ENCODE measurements at regions of chr1 and their contacts with region 1.

Region 1: GRCh38 chr1:170765712-170766330 is 101.9 kb downstream of the PRRX1 start:
- DNase-seq: no peak
- H3K4me3 ChIP-seq: no peak overlapping the region
- H3K27ac ChIP-seq: no peak overlapping the region
- H3K4me1 ChIP-seq: no peaks in the 10 kb centered on the region
- H3K27me3 ChIP-seq: no peaks in the 10 kb centered on the region
- CTCF ChIP-seq: peak; percentile 59 to 72 (median 65)

Region 2: DNA sequence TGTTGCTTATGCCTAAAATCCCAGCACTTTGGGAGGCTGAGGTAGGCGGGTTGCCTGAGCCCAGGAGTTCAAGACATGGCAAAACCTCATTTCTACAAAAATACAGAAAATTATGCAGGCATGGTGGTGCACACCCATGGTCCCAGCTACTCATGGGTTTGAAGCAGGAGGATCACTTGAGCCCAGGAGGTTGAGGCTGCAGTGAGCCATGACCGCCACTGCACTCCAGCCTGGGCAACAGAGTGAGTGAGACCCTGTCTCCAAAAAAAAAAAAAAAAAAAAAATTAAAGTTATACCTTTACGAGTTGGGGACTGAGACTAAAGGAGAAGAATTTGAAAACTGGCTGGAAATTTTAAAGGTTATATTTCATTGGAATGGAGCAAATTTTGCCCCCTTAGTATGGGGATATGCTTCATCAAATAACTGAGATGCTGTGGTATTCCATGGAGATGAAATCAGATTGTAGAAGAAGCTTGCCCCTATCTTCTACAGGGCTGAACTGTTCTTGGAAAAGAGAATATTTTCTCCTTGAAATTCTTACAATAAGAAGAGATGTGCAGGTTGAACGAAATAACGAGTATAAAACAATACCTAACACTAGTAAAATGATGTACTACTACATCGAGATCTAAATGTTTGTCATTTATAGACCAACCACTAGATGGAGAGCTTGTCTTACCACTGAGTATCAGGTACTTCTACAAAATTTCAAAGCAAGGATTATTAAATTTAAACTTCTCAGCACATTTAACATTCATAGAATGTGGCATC is 837.2 kb before region 1 on chr1:
- intact Hi-C with region 1: loop called (anchors 2 kb)
- DNase-seq: no peak
- H3K4me3 ChIP-seq: no peak overlapping the region
- H3K27ac ChIP-seq: no peak overlapping the region
- H3K4me1 ChIP-seq: peaks cover 0 to 5% of the 10 kb centered on the region in 2 donors
- H3K27me3 ChIP-seq: no peaks in the 10 kb centered on the region
- CTCF ChIP-seq: peak; percentile 48 to 69 (median 65)

Region 3: GRCh38 chr1:170010443-170010842 is 755.4 kb before region 1 on chr1:
- intact Hi-C with region 1: loop called (anchors 10 kb)
- DNase-seq: no peak
- H3K4me3 ChIP-seq: no peak overlapping the region
- H3K27ac ChIP-seq: no peak overlapping the region
- H3K4me1 ChIP-seq: no peaks in the 10 kb centered on the region
- H3K27me3 ChIP-seq: no peaks in the 10 kb centered on the region
- CTCF ChIP-seq: peak in 2 of 3 experiments; percentile 31 to 52

Region 4: DNA sequence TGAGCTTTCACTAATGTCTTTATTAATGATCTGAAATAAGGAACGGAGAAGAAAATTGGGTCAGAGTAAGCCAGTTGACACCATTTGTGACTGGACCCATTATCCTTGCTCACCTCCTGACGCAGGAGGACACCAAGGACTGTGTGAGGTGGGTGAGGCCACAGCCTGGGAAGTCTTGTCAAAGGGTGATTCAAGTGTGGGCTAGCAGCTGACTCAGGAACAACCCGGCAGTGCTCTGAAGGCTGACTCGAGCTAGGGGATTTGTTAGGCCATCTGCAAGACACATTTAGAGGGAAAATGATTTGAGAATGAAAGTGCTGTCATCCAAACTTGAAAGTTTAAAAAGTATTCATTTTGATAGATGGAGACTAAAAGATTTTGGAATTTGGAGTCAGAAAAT is 80.7 kb before region 1 on chr1:
- intact Hi-C with region 1: loop called (anchors 5 kb)
- DNase-seq: no peak
- H3K4me3 ChIP-seq: no peak overlapping the region
- H3K27ac ChIP-seq: no peak overlapping the region
- H3K4me1 ChIP-seq: peaks cover 0 to 14% of the 10 kb centered on the region in 2 donors
- H3K27me3 ChIP-seq: no peaks in the 10 kb centered on the region
- CTCF ChIP-seq: no peak